H1 (cell line): ENCODE measurements at regions of chr16 and their contacts with region 1.

Region 1: GRCh38 chr16:88633684-88634140 is 4.7 kb upstream of the IL17C start:
- DNase-seq: peak in 1 of 2 experiments; percentile 73
- H3K4me3 ChIP-seq: peak overlapping the region; percentile 39 to 72 (median 48); a peak in 6 of 8 replicates
- H3K27ac ChIP-seq: no peak overlapping the region
- H3K4me1 ChIP-seq: peaks cover 1 to 32% (median 16%) of the 10 kb centered on the region in 4 experiments
- H3K27me3 ChIP-seq: peaks cover 0 to 4% (median 0%) of the 10 kb centered on the region in 4 experiments; a peak in 2 of 7 replicates
- CTCF ChIP-seq: peak; percentile 62 to 79 (median 77)
- EP300 ChIP-seq: no peak
- POLR2A ChIP-seq: no peak
- RAD21 ChIP-seq: peak; percentile 49 to 59; a peak in 3 of 4 replicates

Region 2: DNA sequence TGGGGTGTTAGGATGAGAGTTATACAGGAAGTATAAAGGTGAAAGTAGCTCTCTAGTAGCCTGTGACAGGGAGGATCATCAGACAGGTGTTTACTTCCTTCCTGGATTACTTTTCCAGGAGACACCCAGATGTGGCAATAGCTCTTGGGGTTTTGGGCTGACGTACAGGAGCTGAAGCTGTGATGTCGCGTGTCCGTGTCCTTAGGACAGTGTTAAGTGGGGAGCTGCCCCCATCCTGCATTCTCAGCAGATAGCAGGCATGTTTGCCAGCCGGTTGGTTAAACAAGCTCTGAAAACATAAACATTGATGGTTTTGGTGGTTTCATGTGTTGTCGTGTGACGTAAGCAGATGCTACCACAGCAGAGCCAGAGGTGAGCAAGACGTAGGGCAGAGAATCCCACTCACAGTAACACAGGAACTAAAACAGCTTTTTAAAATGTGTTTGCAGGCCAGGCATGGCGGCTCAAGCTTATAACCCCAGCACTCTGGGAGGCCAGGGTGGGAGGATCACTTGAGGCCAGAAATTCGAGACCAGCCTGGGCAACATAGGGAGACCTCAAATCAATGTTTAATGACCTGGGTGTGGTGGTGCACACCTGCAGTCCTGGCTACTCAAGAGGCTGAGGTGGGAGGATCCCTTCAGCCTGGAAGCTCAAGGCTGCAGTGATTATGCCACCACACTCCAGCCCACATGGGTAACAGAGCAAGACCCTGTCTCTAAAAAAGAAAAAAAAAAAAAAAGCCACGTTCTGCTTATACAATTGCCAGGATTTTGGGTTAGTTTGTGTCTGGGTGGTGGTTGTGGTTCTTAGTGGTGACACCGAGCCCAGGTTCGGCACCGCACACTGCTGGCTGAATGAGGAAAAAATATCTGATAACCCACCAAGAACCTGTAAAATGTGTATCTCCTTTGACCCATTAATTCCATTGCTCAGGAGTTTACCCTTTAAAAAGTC is 13.6 kb before region 1 on chr16:
- CTCF ChIA-PET with region 1: interaction called, 18 read pairs
- POLR2A ChIA-PET with region 1: interaction called, 10 read pairs
- DNase-seq: no peak
- H3K4me3 ChIP-seq: no peak overlapping the region
- H3K27ac ChIP-seq: no peak overlapping the region; the same call in 1 of the 2 replicates
- H3K4me1 ChIP-seq: peaks cover 0 to 6% (median 0%) of the 10 kb centered on the region in 4 experiments; a peak in 1 of 7 replicates
- H3K27me3 ChIP-seq: no peaks in the 10 kb centered on the region
- CTCF ChIP-seq: no peak
- EP300 ChIP-seq: no peak
- POLR2A ChIP-seq: no peak
- RAD21 ChIP-seq: no peak

Region 3: DNA sequence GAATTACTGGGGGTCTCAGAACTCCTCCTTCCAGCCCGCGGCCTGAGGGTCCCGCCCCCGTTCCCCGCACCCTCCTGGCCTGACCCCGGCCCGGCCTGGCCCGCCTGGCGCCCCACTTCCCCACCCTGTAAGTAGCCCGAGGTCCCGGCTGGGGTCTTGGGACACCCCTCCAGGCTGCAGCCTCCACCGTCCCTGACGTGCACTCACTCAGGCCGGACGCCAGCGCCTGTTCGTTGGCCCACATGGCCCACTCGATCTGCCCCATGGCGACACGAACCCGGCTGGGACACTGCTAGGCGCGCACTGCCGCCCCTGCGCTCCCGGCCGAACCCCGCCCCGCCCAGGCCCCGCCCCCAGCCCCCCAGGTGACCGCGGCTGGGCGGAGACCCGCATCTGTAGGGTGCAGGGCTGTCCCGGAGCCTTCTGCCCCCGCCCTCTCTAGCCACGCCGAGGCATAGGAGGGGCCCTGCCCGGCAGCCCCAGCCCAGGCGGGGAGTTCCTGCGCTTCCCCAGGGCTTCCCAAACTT is 17.1 kb after region 1 on chr16 and contains the start of gene CYBA:
- CTCF ChIA-PET with region 1: interaction called, 13 read pairs
- POLR2A ChIA-PET with region 1: interaction called, 35 read pairs
- DNase-seq: peak in 1 of 2 experiments; percentile 90
- H3K4me3 ChIP-seq: peak within 1 kb of the TSS; percentile 69 to 95 (median 78)
- H3K27ac ChIP-seq: no peak within 1 kb of the TSS
- H3K4me1 ChIP-seq: peaks cover 0 to 11% (median 7%) of the 10 kb centered on the region in 4 experiments; a peak in 5 of 7 replicates
- H3K27me3 ChIP-seq: no peaks in the 10 kb centered on the region
- CTCF ChIP-seq: no peak
- EP300 ChIP-seq: no peak
- POLR2A ChIP-seq: peak in 1 of 2 experiments; percentile 69; a peak in 1 of 3 replicates
- RAD21 ChIP-seq: no peak
- total RNA-seq, gene CYBA: 136 and 161 TPM in 2 replicates